ENCODE measurements at regions of chr12 and their contacts with region 1.

Region 1: GRCh38 chr12:67288561-67288960 is 19.4 kb downstream of the CAND1 start:
- DNase-seq: no peak
- H3K4me3 Mint-ChIP-seq: no peak overlapping the region
- H3K27ac Mint-ChIP-seq: peak overlapping the region; percentile 62
- H3K4me1 Mint-ChIP-seq: peaks cover 46% of the 10 kb centered on the region
- H3K27me3 Mint-ChIP-seq: no peaks in the 10 kb centered on the region

Region 2: GRCh38 chr12:67096533-67097318 is 191.8 kb before region 1 on chr12:
- intact Hi-C with region 1: no loop called
- DNase-seq: no peak
- H3K4me3 Mint-ChIP-seq: no peak overlapping the region
- H3K27ac Mint-ChIP-seq: no peak overlapping the region
- H3K4me1 Mint-ChIP-seq: no peaks in the 10 kb centered on the region
- H3K27me3 Mint-ChIP-seq: peaks cover 2% of the 10 kb centered on the region

Region 3: GRCh38 chr12:67274186-67274585 is 14.4 kb before region 1 on chr12:
- intact Hi-C with region 1: loop called (anchors 1 kb)
- DNase-seq: no peak
- H3K4me3 Mint-ChIP-seq: peak overlapping the region; percentile 53
- H3K27ac Mint-ChIP-seq: no peak overlapping the region
- H3K4me1 Mint-ChIP-seq: peaks cover 79% of the 10 kb centered on the region
- H3K27me3 Mint-ChIP-seq: no peaks in the 10 kb centered on the region

Region 4: DNA sequence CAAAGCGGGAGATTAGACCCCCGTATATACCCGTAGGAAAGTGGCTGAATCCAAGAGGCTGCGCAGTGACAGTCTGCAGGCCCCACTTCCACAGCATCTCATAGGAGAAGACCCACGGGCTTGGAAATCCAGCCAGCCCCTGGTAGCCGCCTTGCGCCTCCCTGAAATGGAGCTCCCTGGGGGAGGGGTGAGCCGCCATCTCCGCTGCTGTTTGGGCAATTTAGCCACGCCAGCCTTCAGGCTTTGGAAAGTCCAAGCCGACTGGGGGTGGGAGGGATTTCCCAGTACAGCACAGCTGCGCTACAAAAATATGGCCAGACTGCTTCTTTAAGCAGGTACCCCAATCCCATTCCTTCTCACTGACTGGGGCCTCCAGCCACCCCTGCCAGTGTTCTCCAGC is 34.0 kb after region 1 on chr12:
- intact Hi-C with region 1: loop called (anchors 1 kb)
- DNase-seq: no peak
- H3K4me3 Mint-ChIP-seq: no peak overlapping the region
- H3K27ac Mint-ChIP-seq: no peak overlapping the region
- H3K4me1 Mint-ChIP-seq: peaks cover 15% of the 10 kb centered on the region
- H3K27me3 Mint-ChIP-seq: no peaks in the 10 kb centered on the region